ENCODE measurements at regions of chr5 and their contacts with region 1.

Region 1: DNA sequence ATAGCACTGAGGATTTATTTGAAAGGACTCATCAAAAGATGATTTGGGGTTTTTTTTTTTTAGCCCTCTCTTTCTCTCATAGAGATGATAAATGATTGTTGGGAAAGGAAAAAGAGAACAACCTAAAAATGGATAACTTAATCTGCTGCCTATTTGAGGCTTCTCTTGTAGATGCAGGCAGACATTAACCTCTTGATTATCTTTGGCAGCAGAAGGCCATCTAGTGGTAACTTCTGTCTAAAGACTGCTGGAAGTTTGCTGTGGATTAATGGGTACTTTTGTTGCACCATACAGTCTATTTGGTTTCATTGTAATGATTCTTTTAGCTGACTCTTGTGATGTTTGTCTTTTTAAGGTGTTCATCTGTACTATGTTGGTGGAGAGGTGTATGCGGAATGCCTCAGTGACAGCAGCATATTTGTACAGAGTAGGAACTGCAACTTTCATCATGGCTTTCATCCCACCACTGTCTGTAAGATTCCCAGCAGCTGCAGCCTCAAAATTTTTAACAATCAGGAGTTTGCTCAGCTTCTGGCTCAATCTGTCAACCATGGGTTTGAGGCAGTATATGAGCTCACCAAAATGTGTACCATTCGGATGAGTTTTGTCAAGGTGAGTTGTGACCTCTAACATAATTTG is 18.8 kb downstream of the SMIM32 start:
- H3K4me3 ChIP-seq: no peak overlapping the region
- H3K27ac ChIP-seq: no peak overlapping the region
- H3K4me1 ChIP-seq: no peaks in the 10 kb centered on the region
- CTCF ChIP-seq: peak; percentile 46

Region 2: DNA sequence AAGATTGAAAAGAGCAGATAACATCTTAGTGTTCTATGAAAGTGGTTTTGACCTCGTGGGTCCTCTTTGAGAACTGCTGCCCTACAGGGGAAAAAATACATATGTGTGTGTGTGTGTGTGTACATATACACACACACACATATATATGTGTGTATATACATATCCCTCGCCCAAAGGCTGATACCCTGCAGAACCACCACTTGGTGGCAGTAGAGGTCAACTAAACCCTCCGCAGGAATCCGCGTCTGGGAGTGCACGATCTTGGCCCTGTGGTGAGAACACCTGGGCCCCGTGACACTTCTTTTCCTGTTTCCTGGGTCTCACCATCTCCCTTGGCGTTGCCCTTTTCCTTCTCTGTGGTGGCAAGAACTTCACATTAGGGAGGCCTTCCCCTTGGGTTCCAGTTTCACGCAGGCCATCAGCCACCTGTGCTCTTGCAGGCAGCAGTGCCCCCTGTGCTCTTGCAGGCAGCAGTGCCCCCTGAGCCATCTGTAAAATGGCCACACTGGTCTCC is 286.7 kb before region 1 on chr5:
- CTCF ChIA-PET with region 1: interaction called, 14 read pairs
- POLR2A ChIA-PET with region 1: no interaction called
- H3K4me3 ChIP-seq: no peak overlapping the region
- H3K27ac ChIP-seq: no peak overlapping the region
- H3K4me1 ChIP-seq: peaks cover 12% of the 10 kb centered on the region
- CTCF ChIP-seq: peak; percentile 88

Region 3: DNA sequence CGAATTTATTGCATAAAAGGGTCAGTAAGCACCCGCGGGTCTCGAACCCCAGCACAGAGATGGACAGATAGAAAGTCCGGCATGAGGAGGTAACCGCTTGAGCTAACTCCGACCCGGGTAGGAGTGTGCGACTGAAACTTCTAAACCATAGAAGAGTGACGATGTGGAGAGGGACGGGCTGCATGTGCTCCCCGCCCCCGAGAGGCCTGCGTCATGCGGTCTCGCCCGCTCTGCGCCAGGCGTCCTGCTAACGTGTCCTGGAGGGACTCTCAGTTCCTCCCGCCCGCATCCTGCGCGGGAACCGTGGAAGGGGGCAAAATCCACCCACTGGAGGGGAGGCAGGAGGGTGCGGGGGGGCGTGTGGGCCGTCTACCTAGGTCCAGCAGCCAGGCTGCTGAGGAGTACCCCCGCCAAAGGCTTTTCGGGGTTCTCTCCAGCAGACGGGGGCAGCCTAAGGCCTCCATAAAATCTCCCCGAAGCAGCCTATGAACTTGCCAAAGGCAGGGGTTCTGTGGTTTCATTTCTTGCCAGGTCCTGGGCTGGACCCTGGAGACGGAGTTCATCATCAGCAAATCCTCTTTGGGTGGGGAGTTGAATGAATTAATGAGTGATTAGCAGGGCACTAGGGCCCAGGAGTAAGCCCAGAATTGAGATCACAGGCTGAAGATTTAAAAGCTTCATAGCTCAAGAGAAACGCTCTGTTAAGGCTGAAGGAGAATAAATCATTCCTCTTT is 93.5 kb before region 1 on chr5:
- CTCF ChIA-PET with region 1: interaction called, 20 read pairs
- POLR2A ChIA-PET with region 1: no interaction called
- H3K4me3 ChIP-seq: peak overlapping the region; percentile 44
- H3K27ac ChIP-seq: peak overlapping the region; percentile 43; the same call in 1 of the 2 replicates
- H3K4me1 ChIP-seq: peaks cover 3% of the 10 kb centered on the region; the same call in 1 of the 2 replicates
- CTCF ChIP-seq: no peak

Region 4: GRCh38 chr5:136185974-136186665 is 12.0 kb after region 1 on chr5:
- CTCF ChIA-PET with region 1: interaction called, 10 read pairs
- POLR2A ChIA-PET with region 1: no interaction called
- H3K4me3 ChIP-seq: no peak overlapping the region
- H3K27ac ChIP-seq: no peak overlapping the region
- H3K4me1 ChIP-seq: no peaks in the 10 kb centered on the region
- CTCF ChIP-seq: no peak

Region 5: DNA sequence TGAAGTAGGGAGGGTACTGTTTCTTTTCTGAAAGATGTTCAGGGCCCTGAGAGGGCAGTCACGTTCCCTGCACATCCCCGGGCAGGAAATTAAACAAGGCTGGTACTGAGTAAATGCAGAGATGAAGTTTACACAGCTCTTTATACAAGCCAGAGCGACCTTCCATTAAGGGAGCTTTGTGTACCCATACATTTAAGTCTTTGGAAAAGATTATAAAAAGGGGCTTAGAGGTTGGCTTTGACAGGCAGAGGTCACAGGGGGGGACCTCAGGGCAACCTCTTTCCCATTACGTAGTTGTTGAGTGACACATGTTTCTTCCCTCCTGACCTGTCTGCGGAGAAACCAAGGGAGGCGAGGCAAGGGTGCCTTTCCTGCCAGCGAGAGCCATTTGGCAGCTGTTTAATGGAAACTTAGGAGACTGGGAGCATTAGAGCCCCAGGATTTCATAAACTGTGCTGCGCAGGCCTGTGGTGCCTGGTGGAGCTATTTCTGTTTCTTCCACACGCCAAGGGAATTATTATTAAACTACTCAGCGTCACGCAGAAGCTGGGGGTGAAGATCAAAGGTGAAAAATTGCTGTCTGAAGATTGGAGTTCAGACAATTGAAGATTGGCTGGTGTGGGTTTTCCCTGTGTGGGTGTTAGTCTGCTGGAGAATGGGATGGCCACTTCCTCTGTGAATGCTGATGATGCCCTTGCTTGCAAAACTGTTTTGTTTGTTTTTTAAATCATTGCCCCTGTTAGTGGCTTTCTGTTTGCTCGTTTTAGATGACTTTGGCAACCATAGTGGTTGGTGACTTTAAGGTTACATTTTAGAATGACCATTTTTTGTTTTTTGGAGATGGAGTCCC is 22.1 kb after region 1 on chr5:
- CTCF ChIA-PET with region 1: no interaction called
- POLR2A ChIA-PET with region 1: no interaction called
- H3K4me3 ChIP-seq: no peak overlapping the region
- H3K27ac ChIP-seq: no peak overlapping the region
- H3K4me1 ChIP-seq: no peaks in the 10 kb centered on the region; the same call in 1 of the 2 replicates
- CTCF ChIP-seq: no peak

Measured in HEK293 (cell line).